Activated CD4-positive, alpha-beta T cell treated with anti-CD3 and anti-CD28 coated beads, Interleukin-2, amount 10 ng/mL, durations not matched to agents 7 days and 5 days (primary cell): ENCODE measurements at regions of chr11 and their contacts with region 1.

Region 1: DNA sequence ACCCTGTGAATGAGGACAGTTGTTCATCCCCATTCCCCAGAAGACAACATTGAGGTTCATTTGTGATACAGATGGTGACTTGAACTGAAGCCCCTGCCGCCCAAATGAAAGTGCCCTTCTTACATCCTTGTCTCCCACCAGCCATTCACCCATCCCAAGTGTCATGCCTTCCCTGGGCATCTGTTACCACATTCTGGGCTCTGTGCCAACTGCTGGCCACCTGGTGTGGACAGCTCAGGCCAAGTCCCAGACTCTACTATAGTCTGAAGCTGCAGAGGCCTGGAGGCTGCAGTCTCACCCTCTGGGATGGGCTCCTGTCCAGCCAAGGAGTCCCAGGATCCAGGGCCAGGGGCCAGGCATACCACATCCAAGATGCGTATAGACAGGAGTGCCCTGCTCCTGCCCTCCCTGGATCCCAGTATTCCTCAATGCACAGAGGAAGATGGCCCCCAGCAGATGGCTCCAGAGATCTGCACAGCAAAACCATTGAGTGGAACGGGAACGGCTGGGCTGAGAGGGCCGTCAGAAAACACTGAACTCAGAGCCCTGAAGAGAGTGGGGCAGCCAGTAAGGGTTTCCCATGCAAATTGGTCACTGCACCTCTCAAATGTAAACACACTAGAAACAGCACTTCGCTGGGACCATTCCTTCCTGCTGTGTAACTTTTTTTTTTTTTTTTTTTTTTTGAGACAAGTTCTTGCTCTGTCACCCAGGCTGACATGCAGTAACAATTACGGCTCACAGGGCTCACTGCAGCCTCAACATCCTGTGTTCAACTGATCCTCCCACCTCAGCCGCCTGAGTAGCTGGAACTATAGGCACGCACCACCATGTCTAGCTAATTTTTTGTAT is 22.8 kb downstream of the ARRB1 start:
- DNase-seq: peak; percentile 82
- H3K4me3 Mint-ChIP-seq: peak overlapping the region; percentile 41
- H3K27ac Mint-ChIP-seq: peak overlapping the region; percentile 93
- H3K4me1 Mint-ChIP-seq: peaks cover 67% of the 10 kb centered on the region
- H3K27me3 Mint-ChIP-seq: no peaks in the 10 kb centered on the region

Region 2: DNA sequence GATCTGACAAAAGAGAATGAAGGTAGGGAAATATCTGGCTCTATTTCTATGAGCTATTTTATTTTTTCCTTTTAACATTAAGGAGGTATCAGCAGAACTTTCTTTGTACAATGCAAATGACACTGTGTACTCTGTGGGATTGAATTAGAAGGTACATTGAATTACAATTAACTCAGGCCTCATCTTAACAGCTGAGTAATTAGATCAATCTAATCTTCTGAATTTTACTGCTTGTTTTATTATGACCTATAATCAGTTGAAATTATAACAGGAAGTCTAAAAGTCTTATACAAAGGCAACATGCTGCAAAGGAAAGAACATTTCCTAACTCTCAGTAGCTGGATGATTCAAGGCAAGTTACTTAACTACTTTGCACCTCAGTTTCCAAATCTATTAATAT is 1882.7 kb before region 1 on chr11:
- CTCF ChIA-PET with region 1: no interaction called
- POLR2A ChIA-PET with region 1: no interaction called
- DNase-seq: no peak
- H3K4me3 Mint-ChIP-seq: no peak overlapping the region
- H3K27ac Mint-ChIP-seq: no peak overlapping the region
- H3K4me1 Mint-ChIP-seq: no peaks in the 10 kb centered on the region
- H3K27me3 Mint-ChIP-seq: no peaks in the 10 kb centered on the region

Region 3: DNA sequence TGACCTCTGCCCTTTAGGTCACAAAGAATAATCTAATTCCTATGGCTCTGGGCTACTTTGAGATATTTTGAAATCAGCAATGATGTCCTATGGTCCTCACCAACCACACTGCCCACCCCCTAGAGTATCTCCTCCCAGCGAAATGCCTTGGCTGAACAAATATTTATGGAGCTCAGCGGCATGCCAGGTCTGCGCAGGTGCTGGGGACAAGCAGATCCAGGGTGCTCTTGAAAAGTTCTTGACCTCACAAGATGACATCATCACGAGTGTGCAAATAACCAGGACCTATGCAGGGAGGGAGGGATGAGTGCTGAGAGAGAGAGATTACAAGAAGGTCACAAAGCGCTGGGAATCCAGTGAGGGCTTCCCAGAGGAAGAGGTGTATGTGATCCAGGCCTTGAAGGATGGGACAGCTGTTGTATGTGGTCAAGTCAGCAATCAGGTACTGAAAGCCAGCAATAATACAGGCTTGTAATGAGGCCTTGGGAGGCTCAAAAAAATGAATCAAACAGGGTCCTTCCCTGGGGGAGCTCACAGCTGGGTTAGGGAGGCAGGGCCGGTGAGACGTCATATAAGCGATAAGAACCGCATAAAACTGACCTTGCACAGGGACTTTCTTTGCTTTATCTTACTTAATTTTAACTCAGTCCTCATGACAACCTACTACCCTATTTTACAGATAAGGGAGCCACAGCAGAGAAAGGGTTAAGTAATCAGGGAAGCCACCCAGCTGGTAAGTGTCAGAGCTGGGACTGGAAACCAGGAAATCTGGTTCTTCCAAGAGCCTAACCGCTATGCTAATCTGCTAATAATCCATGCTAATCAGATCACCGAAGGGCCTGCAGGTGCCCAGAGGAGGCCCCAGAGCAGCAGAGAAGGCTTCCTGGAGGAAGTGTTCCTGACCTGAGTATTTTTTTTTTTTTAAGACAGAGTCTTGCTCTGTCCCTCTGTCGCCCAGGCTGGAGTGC is 14.5 kb after region 1 on chr11:
- CTCF ChIA-PET with region 1: interaction called, 31 read pairs
- POLR2A ChIA-PET with region 1: no interaction called
- DNase-seq: no peak
- H3K4me3 Mint-ChIP-seq: no peak overlapping the region
- H3K27ac Mint-ChIP-seq: peak overlapping the region; percentile 39
- H3K4me1 Mint-ChIP-seq: peaks cover 93% of the 10 kb centered on the region
- H3K27me3 Mint-ChIP-seq: no peaks in the 10 kb centered on the region